Caco-2 (cell line): ENCODE measurements at regions of chr4 and their contacts with region 1.

Region 1: DNA sequence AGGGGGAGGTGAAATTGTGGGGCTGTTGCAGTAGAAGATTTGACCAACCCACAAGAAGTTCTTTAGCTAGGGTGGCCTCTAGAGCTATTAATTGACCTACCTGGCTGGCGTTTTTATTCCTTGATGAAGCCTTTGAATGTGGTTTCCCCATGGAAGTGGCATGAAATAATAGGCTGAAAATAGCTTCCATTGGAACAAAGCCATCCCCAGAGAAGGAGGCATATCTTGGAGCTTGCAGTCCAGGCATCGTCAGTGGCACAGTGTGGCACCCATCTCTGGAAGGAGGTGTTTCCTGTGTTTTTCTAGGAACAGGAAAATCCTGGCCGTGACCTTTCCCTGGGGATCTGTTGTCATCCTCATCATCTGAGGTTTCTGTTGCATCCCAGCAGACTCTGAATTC is 96.3 kb upstream of the WDR1 start:
- DNase-seq: no peak
- H3K4me3 ChIP-seq: no peak overlapping the region
- H3K4me3 Mint-ChIP-seq: peak overlapping the region; percentile 29
- H3K27ac Mint-ChIP-seq: peak overlapping the region; percentile 42
- H3K4me1 ChIP-seq: peaks cover 37% of the 10 kb centered on the region
- H3K4me1 Mint-ChIP-seq: no peaks in the 10 kb centered on the region
- H3K27me3 ChIP-seq: no peaks in the 10 kb centered on the region
- H3K27me3 Mint-ChIP-seq: no peaks in the 10 kb centered on the region
- CTCF ChIP-seq: no peak

Region 2: DNA sequence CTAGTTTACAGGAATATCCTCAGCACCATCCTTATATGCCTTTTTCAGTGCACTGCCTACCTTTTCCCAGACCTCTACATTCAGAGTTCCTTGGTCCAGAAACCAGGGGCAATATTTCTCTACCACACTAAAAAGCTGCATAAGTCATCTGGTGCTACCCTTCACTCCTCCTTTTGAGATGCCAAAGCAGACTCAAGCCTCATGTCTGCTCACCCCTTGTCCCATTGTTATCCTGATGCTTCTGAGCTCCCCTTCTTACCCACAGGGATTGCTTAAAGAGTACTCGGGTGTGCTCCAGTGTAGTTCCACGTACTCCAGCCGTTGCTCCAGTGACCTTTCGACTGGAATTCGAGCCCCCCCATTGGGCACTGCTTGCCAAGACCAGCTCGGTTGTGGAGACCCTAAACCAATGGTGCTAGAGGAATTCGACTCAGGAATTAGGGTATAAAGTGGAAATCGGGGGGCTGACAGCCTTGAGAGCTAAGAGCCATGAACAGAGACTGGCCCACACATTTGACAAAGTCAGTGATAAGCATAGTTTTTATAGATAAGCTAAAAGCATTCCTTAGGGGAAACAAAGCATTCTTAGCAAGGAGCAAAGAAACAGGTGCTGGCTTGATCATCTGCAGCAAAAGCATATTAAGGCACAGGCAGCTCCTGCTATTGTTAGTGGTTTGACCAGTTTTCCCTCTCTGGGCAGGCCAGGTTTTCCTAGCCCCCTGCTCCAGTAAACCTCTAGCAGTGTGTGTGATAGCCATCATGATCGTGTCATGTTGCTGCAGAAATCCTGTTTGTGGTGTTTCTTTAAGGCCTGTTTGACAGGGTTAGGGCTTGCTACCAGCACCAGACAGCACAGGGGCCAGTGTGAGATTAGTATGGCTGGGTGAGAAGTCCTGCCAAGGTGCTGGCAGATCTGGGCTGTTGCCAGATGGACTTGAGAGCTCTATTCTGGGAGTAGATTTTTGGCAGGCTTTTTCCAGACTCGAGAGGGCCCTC is 38.8 kb before region 1 on chr4:
- CTCF ChIA-PET with region 1: no interaction called
- POLR2A ChIA-PET with region 1: no interaction called
- intact Hi-C with region 1: loop called (anchors 1 kb)
- DNase-seq: peak; percentile 70 to 82
- H3K4me3 ChIP-seq: no peak overlapping the region
- H3K4me3 Mint-ChIP-seq: peak overlapping the region; percentile 2
- H3K27ac Mint-ChIP-seq: peak overlapping the region; percentile 87
- H3K4me1 ChIP-seq: peaks cover 52% of the 10 kb centered on the region
- H3K4me1 Mint-ChIP-seq: peaks cover 16% of the 10 kb centered on the region
- H3K27me3 ChIP-seq: no peaks in the 10 kb centered on the region
- H3K27me3 Mint-ChIP-seq: no peaks in the 10 kb centered on the region
- CTCF ChIP-seq: no peak